ENCODE measurements at regions of chr17 and their contacts with region 1.

Region 1: DNA sequence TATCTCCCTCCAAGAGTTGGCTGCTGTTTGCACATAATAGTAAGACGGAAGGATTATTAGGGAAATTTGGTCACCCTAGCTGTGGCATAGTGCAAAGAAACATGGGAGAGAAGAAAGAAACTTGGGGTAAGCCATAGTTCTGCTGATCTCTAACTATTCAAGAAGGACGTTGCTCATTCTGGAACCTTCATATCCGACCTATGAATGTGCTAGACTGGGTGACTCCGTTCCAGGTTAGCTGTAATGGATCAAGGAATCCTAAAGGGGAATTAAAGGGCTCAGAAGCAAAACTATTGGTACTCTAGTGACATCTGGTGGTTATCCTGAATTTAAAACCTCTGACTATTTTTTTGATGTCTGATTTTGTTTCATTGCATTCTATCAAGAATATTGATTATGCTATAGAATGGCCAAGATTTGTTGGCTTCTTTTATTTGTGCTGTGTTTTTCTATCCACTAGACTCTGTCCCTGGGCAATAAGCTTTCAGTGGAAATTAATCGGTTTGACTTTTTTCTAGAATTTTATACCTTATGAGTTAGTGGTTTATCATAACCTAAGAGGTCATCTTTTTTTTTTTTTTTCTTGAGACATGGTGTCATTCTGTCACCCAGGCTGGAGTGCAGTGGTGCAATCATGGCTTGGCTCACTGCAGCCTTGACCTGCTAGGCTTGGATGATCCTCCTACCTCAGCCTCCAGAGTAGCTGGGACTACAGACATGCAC is 19.5 kb downstream of the PCTP start:
- DNase-seq: peak; percentile 74
- H3K4me3 Mint-ChIP-seq: no peak overlapping the region
- H3K27ac Mint-ChIP-seq: no peak overlapping the region
- H3K4me1 Mint-ChIP-seq: peaks cover 27% of the 10 kb centered on the region
- H3K27me3 Mint-ChIP-seq: no peaks in the 10 kb centered on the region
- CTCF ChIP-seq: peak; percentile 62

Region 2: DNA sequence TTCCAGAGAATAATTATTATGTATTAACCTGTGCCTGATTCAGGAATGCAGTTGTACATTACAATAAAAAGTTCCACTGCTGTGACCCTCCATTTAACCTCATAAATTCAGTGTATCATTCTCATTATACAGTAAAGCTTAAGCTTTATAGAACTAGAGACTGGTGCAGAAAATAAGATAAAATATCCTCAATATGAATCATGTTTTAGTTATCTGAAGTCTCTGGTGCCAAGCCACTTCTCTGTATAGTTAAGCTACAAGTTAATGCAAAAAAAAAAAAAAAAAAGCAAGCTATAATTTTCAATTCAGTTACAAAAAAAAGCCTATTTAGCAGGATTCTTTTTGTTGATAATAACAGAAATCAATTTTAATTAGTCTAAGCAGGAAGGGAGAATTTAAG is 236.7 kb before region 1 on chr17:
- CTCF ChIA-PET with region 1: interaction called, 153 read pairs
- POLR2A ChIA-PET with region 1: no interaction called
- intact Hi-C with region 1: no loop called
- DNase-seq: no peak
- H3K4me3 Mint-ChIP-seq: no peak overlapping the region
- H3K27ac Mint-ChIP-seq: no peak overlapping the region
- H3K4me1 Mint-ChIP-seq: no peaks in the 10 kb centered on the region
- H3K27me3 Mint-ChIP-seq: no peaks in the 10 kb centered on the region
- CTCF ChIP-seq: no peak

Region 3: DNA sequence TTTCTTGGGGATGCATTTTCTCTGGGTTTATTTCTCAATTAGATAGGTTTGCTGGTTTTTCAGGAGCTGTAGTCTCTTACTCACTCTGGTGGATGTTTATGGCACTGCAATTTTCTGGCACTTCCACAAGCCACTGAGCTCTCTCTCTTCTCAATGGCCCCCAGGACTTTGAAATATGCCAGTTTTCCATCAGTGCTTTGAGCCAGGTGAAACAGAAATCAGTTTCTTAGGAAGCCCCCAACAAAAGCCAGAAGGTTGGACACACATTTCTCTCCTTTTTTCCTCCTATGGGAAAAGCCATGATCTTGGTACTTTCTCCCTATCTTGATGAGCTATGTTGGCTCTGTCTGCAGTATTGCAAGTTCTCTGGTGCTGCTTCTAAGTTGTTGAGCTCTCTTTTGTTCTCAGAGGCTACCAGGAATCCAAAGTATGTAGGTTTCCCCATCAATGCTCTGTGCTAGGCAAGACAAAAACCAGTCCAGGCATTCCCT is 168.4 kb before region 1 on chr17:
- CTCF ChIA-PET with region 1: interaction called, 60 read pairs
- POLR2A ChIA-PET with region 1: no interaction called
- intact Hi-C with region 1: loop called (anchors 1 kb)
- DNase-seq: peak; percentile 57
- H3K4me3 Mint-ChIP-seq: no peak overlapping the region
- H3K27ac Mint-ChIP-seq: no peak overlapping the region
- H3K4me1 Mint-ChIP-seq: no peaks in the 10 kb centered on the region
- H3K27me3 Mint-ChIP-seq: no peaks in the 10 kb centered on the region
- CTCF ChIP-seq: peak; percentile 67

Region 4: DNA sequence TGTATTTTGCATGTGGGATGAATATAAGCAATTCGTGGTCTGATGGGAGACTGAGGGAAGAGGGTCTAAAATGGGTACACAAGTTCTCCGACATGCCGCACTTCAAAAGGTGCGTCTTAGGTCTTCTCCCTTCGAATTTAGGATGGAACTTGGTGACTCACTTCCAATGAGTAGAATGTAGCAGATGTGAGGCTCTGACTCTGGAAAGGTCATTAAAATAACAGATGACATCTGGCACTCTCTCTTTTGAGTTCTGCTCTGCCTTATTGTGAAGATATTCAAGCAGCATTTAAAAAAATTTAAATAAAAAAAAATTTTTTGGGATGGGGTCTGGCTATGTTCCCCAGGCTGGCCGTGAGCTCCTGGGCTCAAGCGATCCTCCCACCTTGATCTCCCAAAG is 140.3 kb before region 1 on chr17:
- CTCF ChIA-PET with region 1: no interaction called
- POLR2A ChIA-PET with region 1: no interaction called
- intact Hi-C with region 1: no loop called
- DNase-seq: no peak
- H3K4me3 Mint-ChIP-seq: no peak overlapping the region
- H3K27ac Mint-ChIP-seq: no peak overlapping the region
- H3K4me1 Mint-ChIP-seq: peaks cover 19% of the 10 kb centered on the region
- H3K27me3 Mint-ChIP-seq: no peaks in the 10 kb centered on the region
- CTCF ChIP-seq: no peak

Region 5: GRCh38 chr17:55726440-55726839 is 43.9 kb before region 1 on chr17:
- CTCF ChIA-PET with region 1: interaction called, 77 read pairs
- POLR2A ChIA-PET with region 1: interaction called, 3 read pairs
- intact Hi-C with region 1: no loop called
- DNase-seq: peak; percentile 94
- H3K4me3 Mint-ChIP-seq: peak overlapping the region; percentile 63
- H3K27ac Mint-ChIP-seq: peak overlapping the region; percentile 93
- H3K4me1 Mint-ChIP-seq: peaks cover 68% of the 10 kb centered on the region
- H3K27me3 Mint-ChIP-seq: no peaks in the 10 kb centered on the region
- CTCF ChIP-seq: no peak

Region 6: DNA sequence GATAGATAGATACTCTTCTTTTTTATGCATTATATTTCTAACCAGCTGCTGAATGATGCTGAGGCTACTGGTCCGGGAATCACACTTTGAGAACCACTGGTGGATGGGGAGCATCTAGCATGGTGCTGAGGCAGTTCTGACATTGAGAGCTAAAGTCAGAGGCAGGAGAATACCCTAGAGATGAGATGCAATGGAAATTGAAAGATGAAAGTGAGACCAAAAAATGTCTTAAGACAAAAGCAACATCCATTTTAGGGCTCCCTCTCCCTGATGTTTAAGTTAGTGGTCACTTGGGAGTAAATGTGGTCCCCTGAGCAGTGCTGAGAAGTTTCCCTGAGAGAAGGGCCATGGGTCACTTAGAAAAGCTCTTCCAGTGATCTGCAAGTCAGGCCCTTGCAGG is 12.7 kb before region 1 on chr17:
- CTCF ChIA-PET with region 1: interaction called, 14 read pairs
- POLR2A ChIA-PET with region 1: no interaction called
- intact Hi-C with region 1: no loop called
- DNase-seq: no peak
- H3K4me3 Mint-ChIP-seq: no peak overlapping the region
- H3K27ac Mint-ChIP-seq: no peak overlapping the region
- H3K4me1 Mint-ChIP-seq: peaks cover 6% of the 10 kb centered on the region
- H3K27me3 Mint-ChIP-seq: no peaks in the 10 kb centered on the region
- CTCF ChIP-seq: no peak

Region 7: GRCh38 chr17:55825213-55825612 is 54.9 kb after region 1 on chr17:
- CTCF ChIA-PET with region 1: interaction called, 14 read pairs
- POLR2A ChIA-PET with region 1: no interaction called
- intact Hi-C with region 1: loop called (anchors 2 kb)
- DNase-seq: peak; percentile 41
- H3K4me3 Mint-ChIP-seq: no peak overlapping the region
- H3K27ac Mint-ChIP-seq: no peak overlapping the region
- H3K4me1 Mint-ChIP-seq: no peaks in the 10 kb centered on the region
- H3K27me3 Mint-ChIP-seq: no peaks in the 10 kb centered on the region
- CTCF ChIP-seq: peak; percentile 16

Region 8: GRCh38 chr17:56297184-56297583 is 526.9 kb after region 1 on chr17:
- CTCF ChIA-PET with region 1: no interaction called
- POLR2A ChIA-PET with region 1: no interaction called
- intact Hi-C with region 1: no loop called
- DNase-seq: no peak
- H3K4me3 Mint-ChIP-seq: no peak overlapping the region
- H3K27ac Mint-ChIP-seq: no peak overlapping the region
- H3K4me1 Mint-ChIP-seq: peaks cover 8% of the 10 kb centered on the region
- H3K27me3 Mint-ChIP-seq: no peaks in the 10 kb centered on the region
- CTCF ChIP-seq: no peak

Region 9: GRCh38 chr17:56319517-56319916 is 549.2 kb after region 1 on chr17:
- CTCF ChIA-PET with region 1: interaction called, 11 read pairs
- POLR2A ChIA-PET with region 1: no interaction called
- intact Hi-C with region 1: loop called (anchors 5 kb)
- DNase-seq: peak; percentile 68
- H3K4me3 Mint-ChIP-seq: no peak overlapping the region
- H3K27ac Mint-ChIP-seq: no peak overlapping the region
- H3K4me1 Mint-ChIP-seq: no peaks in the 10 kb centered on the region
- H3K27me3 Mint-ChIP-seq: peaks cover 12% of the 10 kb centered on the region
- CTCF ChIP-seq: peak; percentile 55